BJ (cell line): ENCODE measurements at regions of chr17 and their contacts with region 1.

Region 1: DNA sequence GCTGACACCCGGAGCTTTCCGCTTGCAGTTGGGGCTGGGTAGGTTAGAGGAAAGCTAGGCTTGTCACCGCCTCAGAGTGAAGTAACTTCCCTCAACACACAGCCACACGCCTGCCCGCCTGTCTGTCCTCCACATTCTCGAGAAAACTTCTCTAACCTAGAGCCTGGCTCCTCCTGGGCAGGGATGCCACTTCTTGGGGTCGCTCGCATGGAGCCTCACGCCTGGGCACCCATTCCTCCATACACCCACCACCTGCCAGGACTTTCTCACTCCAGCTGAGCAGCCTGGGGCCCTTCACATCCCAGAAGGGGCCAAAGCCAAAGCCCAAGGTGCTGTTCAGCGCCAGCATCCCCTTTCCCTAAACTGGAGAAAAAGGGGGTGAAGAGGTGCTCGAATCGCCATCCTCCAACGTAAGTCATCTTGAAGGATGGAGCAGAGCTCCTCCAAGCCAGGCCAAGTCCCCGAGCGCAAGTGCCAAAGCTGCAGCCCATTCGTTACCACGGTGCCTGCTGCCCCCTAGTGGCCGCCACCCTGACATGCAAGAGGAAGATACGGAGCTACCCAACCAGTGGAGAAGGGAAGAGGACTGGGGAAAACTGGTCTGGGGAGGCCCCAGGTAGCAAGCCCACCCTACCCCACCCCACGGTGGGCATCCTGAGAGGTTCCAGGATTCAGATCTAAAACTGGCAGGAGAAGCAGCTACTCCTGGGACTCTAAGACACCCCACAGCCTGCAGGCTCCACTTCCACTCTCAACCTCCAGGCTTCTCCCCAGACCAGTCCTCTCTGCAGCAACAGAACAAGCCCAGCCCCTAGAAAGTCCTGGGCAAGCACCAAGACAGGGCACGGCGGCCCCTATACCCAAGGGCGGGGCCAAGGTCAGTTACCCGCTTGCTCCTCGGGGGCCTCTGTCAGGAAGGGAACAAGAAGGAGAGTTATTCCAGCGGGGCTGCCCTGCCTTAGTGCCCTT is 63.1 kb downstream of the MYO18A start:
- DNase-seq: no peak
- H3K4me3 ChIP-seq: no peak overlapping the region
- H3K27me3 ChIP-seq: no peaks in the 10 kb centered on the region
- CTCF ChIP-seq: peak; percentile 94

Region 2: DNA sequence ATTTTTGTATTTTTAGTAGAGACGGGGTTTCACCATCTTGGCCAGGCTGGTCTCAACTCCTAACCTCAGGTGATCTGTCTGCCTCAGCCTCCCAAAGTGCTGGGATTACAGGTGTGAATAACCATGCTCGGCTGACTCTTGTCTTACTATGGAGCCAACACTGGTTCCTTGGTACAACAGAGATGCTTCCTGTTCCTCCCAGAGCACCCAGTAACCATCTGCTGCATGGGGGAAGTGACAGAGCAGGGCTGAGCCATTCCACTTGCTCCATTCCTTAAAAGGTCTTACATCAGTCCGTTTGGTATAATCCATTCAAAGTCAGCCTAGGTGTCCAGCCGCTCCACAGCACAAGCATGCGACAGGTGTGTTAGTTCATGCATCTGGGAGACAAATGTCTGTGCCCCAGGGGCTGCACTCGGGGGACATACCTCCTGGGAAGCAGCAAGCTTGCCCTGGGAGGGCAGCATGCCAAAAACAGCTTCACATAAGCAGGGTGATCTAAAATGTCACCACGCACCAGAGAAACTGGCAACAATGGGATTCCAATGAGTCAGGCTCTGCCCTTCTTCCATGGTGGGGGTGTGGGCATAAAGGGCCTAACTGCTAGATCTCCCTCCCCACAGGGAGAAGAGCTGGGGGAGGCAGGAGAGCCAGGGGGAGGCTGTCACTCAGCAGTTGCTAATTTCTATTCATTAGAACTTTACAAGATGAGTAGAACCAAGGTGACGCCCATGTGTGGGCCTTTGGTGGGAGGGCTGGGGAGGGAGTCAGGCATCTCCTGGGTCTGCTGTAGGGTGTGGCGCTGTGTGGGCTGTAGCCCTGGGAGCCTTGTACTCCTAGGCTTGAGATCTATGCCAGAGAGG is 38.7 kb before region 1 on chr17:
- CTCF ChIA-PET with region 1: interaction called, 13 read pairs
- POLR2A ChIA-PET with region 1: no interaction called
- DNase-seq: no peak
- H3K4me3 ChIP-seq: no peak overlapping the region
- H3K27me3 ChIP-seq: no peaks in the 10 kb centered on the region
- CTCF ChIP-seq: no peak

Region 3: GRCh38 chr17:29084541-29085146 is 32.4 kb before region 1 on chr17:
- CTCF ChIA-PET with region 1: interaction called, 18 read pairs
- POLR2A ChIA-PET with region 1: no interaction called
- DNase-seq: no peak
- H3K4me3 ChIP-seq: no peak overlapping the region
- H3K27me3 ChIP-seq: no peaks in the 10 kb centered on the region
- CTCF ChIP-seq: no peak

Region 4: DNA sequence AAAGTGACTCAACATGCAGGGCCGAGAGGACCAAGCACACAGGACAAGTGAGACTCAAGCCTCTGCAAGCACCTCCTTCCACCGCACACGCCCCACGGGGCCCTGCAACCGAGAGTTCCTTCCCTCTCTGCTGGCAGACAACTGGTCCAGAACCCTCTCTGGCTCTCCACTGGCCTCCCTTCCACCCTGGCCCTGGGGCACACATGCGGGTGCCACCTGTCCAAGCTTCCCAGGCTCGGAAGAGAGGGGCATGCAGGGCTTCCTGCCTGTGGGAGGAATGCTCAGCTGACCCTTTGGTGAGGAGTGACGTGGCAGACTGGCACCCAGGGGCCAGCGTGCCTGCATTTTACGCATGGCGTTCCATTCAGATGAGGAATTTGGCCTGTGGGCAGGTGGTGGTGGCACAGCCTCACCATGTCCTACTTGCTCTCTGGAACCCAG is 14.3 kb before region 1 on chr17:
- CTCF ChIA-PET with region 1: interaction called, 30 read pairs
- POLR2A ChIA-PET with region 1: no interaction called
- DNase-seq: no peak
- H3K4me3 ChIP-seq: no peak overlapping the region
- H3K27me3 ChIP-seq: no peaks in the 10 kb centered on the region
- CTCF ChIP-seq: no peak

Region 5: GRCh38 chr17:29393451-29393850 is 276.4 kb after region 1 on chr17:
- CTCF ChIA-PET with region 1: no interaction called
- POLR2A ChIA-PET with region 1: no interaction called
- DNase-seq: no peak
- H3K4me3 ChIP-seq: no peak overlapping the region
- H3K27me3 ChIP-seq: no peaks in the 10 kb centered on the region
- CTCF ChIP-seq: no peak